ENCODE measurements at regions of chr3 and their contacts with region 1.

Region 1: GRCh38 chr3:138594150-138594934 is at the start of gene CEP70:
- DNase-seq: peak; percentile 96
- H3K4me3 Mint-ChIP-seq: peak within 1 kb of the TSS; percentile 88
- H3K27ac Mint-ChIP-seq: peak within 1 kb of the TSS; percentile 92
- H3K4me1 Mint-ChIP-seq: peaks cover 8% of the 10 kb centered on the region
- H3K27me3 Mint-ChIP-seq: no peaks in the 10 kb centered on the region
- total RNA-seq, gene CEP70: 3.7 and 4.8 TPM in 2 replicates

Region 2: GRCh38 chr3:137347132-137347531 is 1247.2 kb before region 1 on chr3:
- intact Hi-C with region 1: no loop called
- DNase-seq: no peak
- H3K4me3 Mint-ChIP-seq: no peak overlapping the region
- H3K27ac Mint-ChIP-seq: no peak overlapping the region
- H3K4me1 Mint-ChIP-seq: no peaks in the 10 kb centered on the region
- H3K27me3 Mint-ChIP-seq: no peaks in the 10 kb centered on the region

Region 3: DNA sequence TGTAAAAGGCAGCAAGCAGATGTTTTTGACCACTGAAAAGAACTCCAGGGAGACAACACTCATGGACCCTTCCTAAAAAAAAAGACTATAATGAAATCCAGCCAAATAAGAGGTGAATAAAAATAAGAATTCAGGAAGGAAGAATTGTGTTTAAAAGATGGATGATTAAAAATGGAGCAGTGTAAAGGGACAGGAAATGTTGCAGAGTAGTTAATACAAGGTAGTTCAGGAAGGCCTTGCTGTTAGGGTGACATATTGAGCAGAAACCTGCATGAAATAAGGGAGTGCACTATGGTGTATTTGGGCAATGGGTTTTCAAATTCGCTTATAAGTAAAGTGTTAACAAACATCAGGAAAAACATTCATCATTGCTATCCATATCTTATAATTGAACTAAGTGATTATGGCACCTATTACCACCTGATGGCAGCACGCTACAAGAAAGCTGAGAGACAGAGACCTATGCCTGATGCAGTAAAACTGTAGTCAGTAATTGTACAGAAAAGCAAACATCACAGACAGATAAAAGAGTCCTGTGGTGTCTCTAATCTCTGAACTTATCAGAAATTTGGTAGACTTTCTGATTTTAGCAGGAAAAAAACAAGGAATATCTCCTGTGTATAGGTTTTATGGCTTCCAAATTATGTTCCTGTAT is 413.8 kb before region 1 on chr3:
- intact Hi-C with region 1: loop called (anchors 5 kb)
- DNase-seq: peak; percentile 78
- H3K4me3 Mint-ChIP-seq: no peak overlapping the region
- H3K27ac Mint-ChIP-seq: no peak overlapping the region
- H3K4me1 Mint-ChIP-seq: peaks cover 5% of the 10 kb centered on the region
- H3K27me3 Mint-ChIP-seq: peaks cover 25% of the 10 kb centered on the region

Region 4: GRCh38 chr3:138513090-138513843 is 81.1 kb before region 1 on chr3:
- intact Hi-C with region 1: loop called (anchors 1 kb)
- DNase-seq: peak; percentile 73
- H3K4me3 Mint-ChIP-seq: peak overlapping the region; percentile 37
- H3K27ac Mint-ChIP-seq: peak overlapping the region; percentile 80
- H3K4me1 Mint-ChIP-seq: peaks cover 24% of the 10 kb centered on the region
- H3K27me3 Mint-ChIP-seq: no peaks in the 10 kb centered on the region

Region 5: DNA sequence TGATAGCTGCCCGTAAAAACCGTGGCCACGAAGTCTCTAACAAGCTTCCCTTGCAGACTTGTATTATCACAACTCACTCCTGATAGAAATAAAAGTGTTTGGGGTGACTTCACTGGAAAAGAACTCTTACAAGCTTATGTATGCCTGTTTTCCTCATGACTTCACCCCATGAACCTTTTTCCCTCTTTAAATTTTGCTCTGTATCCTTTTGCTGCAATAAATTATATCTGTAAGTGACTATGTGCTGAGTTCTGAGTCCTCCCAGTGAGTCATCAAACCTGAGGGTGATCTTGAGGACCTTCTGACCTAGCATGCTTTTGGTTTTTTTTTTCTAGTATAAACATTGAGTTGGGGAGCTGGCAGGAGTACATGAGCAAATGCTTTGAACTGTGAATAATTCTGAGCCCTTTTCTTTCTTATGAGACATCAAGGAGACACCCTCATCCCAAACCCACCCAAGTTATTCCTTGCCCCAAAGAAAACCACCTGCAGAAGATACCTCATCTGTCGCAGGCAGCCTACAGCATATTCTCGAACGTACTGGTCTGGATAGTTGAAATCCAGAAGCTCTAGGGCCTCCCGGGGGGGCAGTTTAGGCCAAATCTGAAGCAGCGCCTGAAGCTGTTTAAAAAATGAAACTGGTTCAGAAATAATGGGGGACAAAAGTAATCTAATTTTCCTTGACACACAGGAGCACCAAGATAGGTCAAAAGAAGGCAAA is 100.1 kb after region 1 on chr3:
- intact Hi-C with region 1: loop called (anchors 1 kb)
- DNase-seq: no peak
- H3K4me3 Mint-ChIP-seq: no peak overlapping the region
- H3K27ac Mint-ChIP-seq: no peak overlapping the region
- H3K4me1 Mint-ChIP-seq: no peaks in the 10 kb centered on the region
- H3K27me3 Mint-ChIP-seq: no peaks in the 10 kb centered on the region

Region 6: DNA sequence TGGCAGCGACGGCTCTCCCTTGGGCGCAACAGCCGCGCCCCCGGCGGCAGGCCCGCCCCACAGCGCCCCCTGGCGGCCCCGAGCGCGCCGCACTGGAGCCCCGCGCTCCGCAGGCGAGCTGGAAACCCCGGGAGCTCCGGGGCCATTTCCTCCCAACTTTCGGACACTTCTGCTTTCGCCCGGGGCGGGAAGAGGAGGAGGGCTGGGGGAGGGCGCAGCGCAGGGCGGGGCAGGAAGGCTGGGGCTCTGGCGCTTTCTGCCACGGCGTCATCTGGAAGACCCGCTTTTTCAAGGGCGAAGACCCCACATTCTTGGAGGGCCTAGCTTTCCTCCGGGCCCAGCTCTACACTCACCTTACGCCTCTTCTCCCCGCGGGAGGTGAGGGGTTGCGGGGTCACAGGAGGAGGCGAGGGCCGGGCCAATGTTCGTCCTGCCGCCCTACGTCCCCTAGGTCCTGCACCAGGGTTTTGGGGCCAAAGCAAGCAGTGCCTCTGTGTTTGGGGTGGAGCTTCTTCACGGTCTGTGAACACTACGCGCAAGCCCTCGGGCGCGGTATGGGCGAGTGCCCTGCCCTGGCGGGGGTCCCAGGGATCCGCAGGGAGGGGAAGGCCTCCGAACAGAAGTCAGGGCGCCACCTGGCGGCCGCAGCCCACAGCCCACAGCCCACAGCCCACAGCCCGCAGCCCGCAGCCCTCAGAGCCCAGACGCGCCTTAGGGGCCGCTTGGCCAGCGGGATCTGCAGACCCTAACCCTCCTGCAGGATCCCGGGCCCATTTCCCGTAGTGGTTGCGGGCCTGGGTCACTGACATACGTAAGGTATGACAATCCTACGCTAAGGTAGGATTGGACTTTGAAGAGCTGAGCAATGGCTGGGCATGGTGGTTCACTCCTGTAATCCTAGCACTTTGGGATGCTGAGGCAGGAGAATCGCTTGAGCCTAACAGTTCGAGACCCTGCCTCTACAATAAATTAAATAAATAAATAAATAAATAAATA is 321.5 kb after region 1 on chr3:
- intact Hi-C with region 1: loop called (anchors 1 kb)
- DNase-seq: peak; percentile 94
- H3K4me3 Mint-ChIP-seq: peak overlapping the region; percentile 88
- H3K27ac Mint-ChIP-seq: peak overlapping the region; percentile 76
- H3K4me1 Mint-ChIP-seq: peaks cover 6% of the 10 kb centered on the region
- H3K27me3 Mint-ChIP-seq: peaks cover 17% of the 10 kb centered on the region